T-cell (primary cell): ENCODE measurements at regions of chr19 and their contacts with region 1.

Region 1: GRCh38 chr19:41563854-41564514 is 12.0 kb upstream of the CEACAM21 start:
- DNase-seq: peak in 31 of 35 experiments; percentile 23 to 75 (median 50)
- ATAC-seq: peak; percentile 46 to 83 (median 62)
- H3K4me3 ChIP-seq: peak overlapping the region; percentile 38 to 42
- H3K4me3 Mint-ChIP-seq: peak overlapping the region; percentile 68 to 85 (median 73)
- H3K27ac ChIP-seq: peak overlapping the region; percentile 56
- H3K27ac Mint-ChIP-seq: peak overlapping the region; percentile 43 to 76
- H3K4me1 ChIP-seq: peaks cover 28 to 35% of the 10 kb centered on the region in 2 experiments
- H3K4me1 Mint-ChIP-seq: peaks cover 80 to 89% (median 82%) of the 10 kb centered on the region in 3 donors
- H3K27me3 ChIP-seq: no peaks in the 10 kb centered on the region
- H3K27me3 Mint-ChIP-seq: no peaks in the 10 kb centered on the region

Region 2: DNA sequence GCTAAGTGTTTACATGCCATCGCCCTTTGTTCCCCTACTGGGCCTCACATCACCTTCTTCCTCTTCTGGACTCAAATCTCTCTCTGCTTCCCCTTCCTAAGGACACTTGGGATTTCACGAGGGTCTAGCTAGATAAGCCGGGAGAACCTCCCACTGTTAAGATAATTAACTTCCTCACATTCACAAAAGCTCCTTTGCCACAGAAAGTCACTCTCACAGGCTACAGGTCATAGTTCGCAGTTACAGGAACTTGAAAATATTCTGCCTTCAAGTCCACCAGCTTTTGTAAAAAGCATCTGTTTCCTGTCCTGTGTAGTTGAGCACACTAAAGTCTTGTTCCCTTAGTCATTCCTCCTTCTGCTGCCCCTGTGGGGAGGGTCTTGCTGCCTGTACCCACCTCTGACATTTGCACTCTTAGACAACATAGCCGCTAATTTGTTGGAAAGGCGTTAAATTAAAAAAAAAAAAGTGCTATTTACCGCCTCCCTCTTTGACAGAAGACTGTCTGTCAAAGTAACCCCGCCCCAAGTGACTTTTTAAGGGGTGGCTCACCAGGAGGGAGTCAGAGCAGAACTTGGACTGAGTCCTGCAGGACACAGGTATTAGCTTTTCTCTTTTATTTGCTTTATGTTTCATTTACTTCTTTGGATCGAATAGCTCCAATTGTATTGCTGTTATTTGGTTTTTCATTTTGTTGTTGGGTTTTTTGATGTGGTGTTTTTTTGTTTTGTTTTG is 14.9 kb before region 1 on chr19:
- CTCF ChIA-PET with region 1: interaction called, 5 to 42 read pairs
- POLR2A ChIA-PET with region 1: interaction called, 5 to 7 read pairs
- DNase-seq: peak in 34 of 35 experiments; percentile 38 to 84 (median 68)
- ATAC-seq: peak; percentile 61 to 76 (median 65)
- H3K4me3 ChIP-seq: peak overlapping the region; percentile 78 to 98
- H3K4me3 Mint-ChIP-seq: peak overlapping the region; percentile 88 to 100 (median 98)
- H3K27ac ChIP-seq: peak overlapping the region; percentile 84
- H3K27ac Mint-ChIP-seq: peak overlapping the region; percentile 97 to 99
- H3K4me1 ChIP-seq: peaks cover 41 to 54% of the 10 kb centered on the region in 2 experiments
- H3K4me1 Mint-ChIP-seq: peaks cover 68 to 82% (median 74%) of the 10 kb centered on the region in 3 donors
- H3K27me3 ChIP-seq: no peaks in the 10 kb centered on the region
- H3K27me3 Mint-ChIP-seq: no peaks in the 10 kb centered on the region